Activated T-helper 2 cell treated with anti-CD3 and anti-CD28 coated beads, Interferon-gamma antibody, Interleukin-2, Interleukin-4, amounts not matched to agents 10 μg/mL and 5 μg/mL and 100 μg/mL, durations not matched to agents 14 hours and 24 hours and 36 hours (primary cell): ENCODE measurements at regions of chr1 and their contacts with region 1.

Region 1: GRCh38 chr1:50368179-50369012 is 54.8 kb downstream of the DMRTA2 start:
- DNase-seq: peak; percentile 13
- H3K4me3 Mint-ChIP-seq: no peak overlapping the region
- H3K27ac Mint-ChIP-seq: no peak overlapping the region
- H3K4me1 Mint-ChIP-seq: no peaks in the 10 kb centered on the region
- H3K27me3 Mint-ChIP-seq: peaks cover 21% of the 10 kb centered on the region

Region 2: GRCh38 chr1:50422946-50423669 is 54.7 kb after region 1 on chr1 and contains the start of gene DMRTA2:
- intact Hi-C with region 1: loop called (anchors 5 kb)
- DNase-seq: no peak
- H3K4me3 Mint-ChIP-seq: peak within 1 kb of the TSS; percentile 68
- H3K27ac Mint-ChIP-seq: peak within 1 kb of the TSS; percentile 65
- H3K4me1 Mint-ChIP-seq: peaks cover 26% of the 10 kb centered on the region
- H3K27me3 Mint-ChIP-seq: peaks cover 78% of the 10 kb centered on the region
- total RNA-seq, gene DMRTA2: not detected in 2 replicates

Region 3: DNA sequence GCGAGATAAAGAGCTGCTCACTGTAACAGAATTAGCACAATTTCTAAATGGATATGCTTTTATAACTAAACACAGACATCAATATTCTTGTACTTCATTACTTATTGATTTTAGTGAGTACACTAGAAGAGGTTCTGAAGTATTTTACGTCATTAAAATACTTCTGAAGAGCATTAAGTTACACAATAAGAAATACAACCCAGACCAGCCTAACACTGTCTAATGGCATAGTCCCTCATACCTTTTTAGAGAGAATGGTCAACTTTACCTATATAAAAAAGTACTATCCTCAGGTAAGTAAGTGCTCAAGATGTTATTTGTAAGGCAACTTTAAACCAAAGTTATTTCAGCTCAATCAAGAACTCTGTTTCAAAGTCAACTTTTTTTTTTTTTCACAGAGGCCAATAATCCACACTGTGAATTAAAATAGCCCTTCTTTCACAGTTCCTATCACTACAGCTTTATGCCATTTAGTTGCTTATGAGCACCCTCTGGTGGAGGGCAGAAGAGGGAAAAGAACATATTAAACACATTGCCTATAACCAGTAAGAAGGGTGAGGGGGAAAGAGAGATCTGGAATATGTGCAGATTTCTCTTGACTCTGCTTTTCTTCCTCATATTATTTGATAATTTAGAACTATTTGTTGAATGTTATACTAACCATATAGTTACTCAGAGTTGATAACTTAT is 236.9 kb after region 1 on chr1:
- intact Hi-C with region 1: loop called (anchors 2 kb)
- DNase-seq: no peak
- H3K4me3 Mint-ChIP-seq: no peak overlapping the region
- H3K27ac Mint-ChIP-seq: no peak overlapping the region
- H3K4me1 Mint-ChIP-seq: no peaks in the 10 kb centered on the region
- H3K27me3 Mint-ChIP-seq: no peaks in the 10 kb centered on the region

Region 4: GRCh38 chr1:50704126-50704525 is 335.7 kb after region 1 on chr1:
- intact Hi-C with region 1: loop called (anchors 5 kb)
- DNase-seq: no peak
- H3K4me3 Mint-ChIP-seq: no peak overlapping the region
- H3K27ac Mint-ChIP-seq: no peak overlapping the region
- H3K4me1 Mint-ChIP-seq: no peaks in the 10 kb centered on the region
- H3K27me3 Mint-ChIP-seq: no peaks in the 10 kb centered on the region